ENCODE measurements at regions of chrX and their contacts with region 1.

Region 1: DNA sequence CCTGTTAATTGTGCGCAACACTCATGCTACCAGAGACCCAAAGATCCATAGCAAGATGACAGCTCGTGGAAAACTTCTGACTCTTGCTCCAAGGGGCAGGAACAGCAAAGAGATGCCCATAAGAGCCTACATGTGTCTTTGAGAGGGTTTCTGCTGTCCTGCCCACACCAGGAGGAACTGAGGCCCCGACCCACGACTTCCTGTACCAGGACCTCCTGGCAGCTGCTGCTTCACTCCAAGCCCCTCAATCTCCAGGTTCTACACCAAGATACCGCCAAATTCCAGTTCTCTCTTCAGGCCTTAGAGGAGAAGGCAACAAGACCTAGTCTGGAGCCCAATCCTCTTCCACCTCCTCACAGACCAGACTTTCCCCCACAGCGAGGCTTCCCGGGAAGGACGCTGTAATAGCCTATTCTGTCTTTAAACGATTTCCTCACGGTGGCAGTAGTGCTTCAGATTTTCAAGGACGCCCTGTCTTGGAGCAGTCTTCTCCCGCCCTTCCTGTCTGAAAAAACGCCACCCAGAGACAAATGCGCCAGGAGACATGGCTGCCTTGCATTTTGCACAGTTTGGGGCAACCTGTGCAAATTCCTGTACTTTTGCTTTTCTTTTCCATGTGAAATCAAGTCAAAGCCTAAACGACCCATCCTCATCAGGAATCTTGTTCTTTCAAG is 230.2 kb upstream of the STK26 start:
- DNase-seq: peak; percentile 90
- ATAC-seq: peak; percentile 77
- H3K4me3 ChIP-seq: peak overlapping the region; percentile 52
- H3K27ac ChIP-seq: peak overlapping the region; percentile 91
- H3K4me1 ChIP-seq: no peaks in the 10 kb centered on the region
- H3K27me3 ChIP-seq: no peaks in the 10 kb centered on the region; a peak in 1 of 4 replicates
- CTCF ChIP-seq: peak; percentile 32 to 65 (median 41); a peak in 4 of 6 replicates
- EP300 ChIP-seq: no peak
- POLR2A ChIP-seq: no peak
- RAD21 ChIP-seq: peak; percentile 69

Region 2: GRCh38 chrX:131710431-131711045 is 82.4 kb before region 1 on chrX:
- CTCF ChIA-PET with region 1: interaction called, 3 read pairs
- POLR2A ChIA-PET with region 1: no interaction called
- RAD21 ChIA-PET with region 1: no interaction called
- SMC1A ChIA-PET with region 1: no interaction called
- in situ Hi-C with region 1: no loop called
- intact Hi-C with region 1: loop called (anchors 1 kb)
- DNase-seq: no peak
- ATAC-seq: 0 out of 3 replicates have a peak, but pooled peaks have one; percentile 21
- H3K4me3 ChIP-seq: no peak overlapping the region
- H3K27ac ChIP-seq: peak overlapping the region; percentile 48
- H3K4me1 ChIP-seq: no peaks in the 10 kb centered on the region
- H3K27me3 ChIP-seq: no peaks in the 10 kb centered on the region
- CTCF ChIP-seq: no peak
- EP300 ChIP-seq: no peak
- POLR2A ChIP-seq: no peak
- RAD21 ChIP-seq: no peak

Region 3: DNA sequence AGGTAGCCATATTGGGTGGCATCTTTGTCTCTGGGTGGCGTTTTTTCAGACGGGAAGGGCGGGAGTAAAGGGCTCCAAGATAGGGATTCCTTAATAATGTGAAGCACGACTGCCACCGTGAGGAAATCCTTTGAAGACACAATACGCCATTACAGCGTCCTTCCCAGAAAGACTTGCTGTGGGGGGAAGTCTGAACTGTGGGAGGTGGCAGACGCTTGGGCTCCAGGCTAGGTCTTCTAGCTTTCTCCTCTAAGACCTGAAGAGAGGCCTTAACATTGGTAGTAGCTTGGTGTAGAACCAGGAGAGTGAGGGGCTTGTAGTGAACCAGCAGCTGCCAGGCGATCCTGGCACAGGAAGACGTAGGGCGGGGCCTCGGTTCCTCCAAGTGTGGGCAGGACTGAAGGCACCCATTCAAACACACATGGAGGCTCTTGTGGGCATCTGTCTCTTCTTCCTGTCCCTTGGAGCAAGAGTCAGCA is 51.8 kb before region 1 on chrX:
- CTCF ChIA-PET with region 1: interaction called, 6 read pairs
- POLR2A ChIA-PET with region 1: no interaction called
- RAD21 ChIA-PET with region 1: interaction called, 6 read pairs
- SMC1A ChIA-PET with region 1: interaction called, 6 read pairs
- in situ Hi-C with region 1: no loop called
- intact Hi-C with region 1: loop called (anchors 1 kb)
- DNase-seq: peak; percentile 87
- ATAC-seq: peak; percentile 83
- H3K4me3 ChIP-seq: peak overlapping the region; percentile 63
- H3K27ac ChIP-seq: peak overlapping the region; percentile 95
- H3K4me1 ChIP-seq: no peaks in the 10 kb centered on the region
- H3K27me3 ChIP-seq: no peaks in the 10 kb centered on the region
- CTCF ChIP-seq: peak; percentile 22 to 54 (median 43); a peak in 5 of 6 replicates
- EP300 ChIP-seq: no peak
- POLR2A ChIP-seq: 0 out of 2 replicates have a peak, but pooled peaks have one; percentile 28
- RAD21 ChIP-seq: peak; percentile 64

Region 4: GRCh38 chrX:131746474-131746968 is 46.4 kb before region 1 on chrX:
- CTCF ChIA-PET with region 1: interaction called, 6 read pairs
- POLR2A ChIA-PET with region 1: no interaction called
- RAD21 ChIA-PET with region 1: interaction called, 6 read pairs
- SMC1A ChIA-PET with region 1: interaction called, 6 read pairs
- in situ Hi-C with region 1: no loop called
- intact Hi-C with region 1: loop called (anchors 1 kb)
- DNase-seq: peak; percentile 87
- ATAC-seq: peak; percentile 68
- H3K4me3 ChIP-seq: peak overlapping the region; percentile 63
- H3K27ac ChIP-seq: peak overlapping the region; percentile 93
- H3K4me1 ChIP-seq: no peaks in the 10 kb centered on the region
- H3K27me3 ChIP-seq: no peaks in the 10 kb centered on the region
- CTCF ChIP-seq: peak; percentile 28 to 62 (median 41); a peak in 4 of 6 replicates
- EP300 ChIP-seq: no peak; a peak in 1 of 4 replicates
- POLR2A ChIP-seq: no peak
- RAD21 ChIP-seq: peak; percentile 58

Region 5: GRCh38 chrX:131802835-131803626 is 10.1 kb after region 1 on chrX:
- CTCF ChIA-PET with region 1: interaction called, 5 read pairs
- POLR2A ChIA-PET with region 1: interaction called, 6 read pairs
- RAD21 ChIA-PET with region 1: interaction called, 3 read pairs
- SMC1A ChIA-PET with region 1: interaction called, 6 read pairs
- in situ Hi-C with region 1: no loop called
- intact Hi-C with region 1: loop called (anchors 1 kb)
- DNase-seq: peak; percentile 68
- ATAC-seq: peak; percentile 97
- H3K4me3 ChIP-seq: peak overlapping the region; percentile 58; the same call in 1 of the 2 replicates
- H3K27ac ChIP-seq: peak overlapping the region; percentile 65
- H3K4me1 ChIP-seq: no peaks in the 10 kb centered on the region
- H3K27me3 ChIP-seq: no peaks in the 10 kb centered on the region
- CTCF ChIP-seq: peak; percentile 75 to 83 (median 75)
- EP300 ChIP-seq: no peak
- POLR2A ChIP-seq: no peak
- RAD21 ChIP-seq: peak; percentile 61

Region 6: GRCh38 chrX:131812836-131813825 is 20.2 kb after region 1 on chrX:
- CTCF ChIA-PET with region 1: interaction called, 7 read pairs
- POLR2A ChIA-PET with region 1: interaction called, 6 read pairs
- RAD21 ChIA-PET with region 1: interaction called, 6 read pairs
- SMC1A ChIA-PET with region 1: interaction called, 4 read pairs
- in situ Hi-C with region 1: no loop called
- intact Hi-C with region 1: loop called (anchors 1 kb)
- DNase-seq: peak; percentile 92
- ATAC-seq: peak; percentile 95
- H3K4me3 ChIP-seq: peak overlapping the region; percentile 58
- H3K27ac ChIP-seq: peak overlapping the region; percentile 84
- H3K4me1 ChIP-seq: peaks cover 13% of the 10 kb centered on the region; the same call in 1 of the 2 replicates
- H3K27me3 ChIP-seq: no peaks in the 10 kb centered on the region
- CTCF ChIP-seq: peak; percentile 45 to 86 (median 64); a peak in 5 of 6 replicates
- EP300 ChIP-seq: peak in 1 of 2 experiments; percentile 53; a peak in 2 of 4 replicates
- POLR2A ChIP-seq: no peak
- RAD21 ChIP-seq: peak; percentile 89

Region 7: GRCh38 chrX:131821945-131822622 is 29.2 kb after region 1 on chrX:
- CTCF ChIA-PET with region 1: interaction called, 4 read pairs
- POLR2A ChIA-PET with region 1: no interaction called
- RAD21 ChIA-PET with region 1: no interaction called
- SMC1A ChIA-PET with region 1: interaction called, 3 read pairs
- in situ Hi-C with region 1: no loop called
- intact Hi-C with region 1: loop called (anchors 1 kb)
- DNase-seq: peak; percentile 85
- ATAC-seq: peak; percentile 80
- H3K4me3 ChIP-seq: peak overlapping the region; percentile 64; the same call in 1 of the 2 replicates
- H3K27ac ChIP-seq: peak overlapping the region; percentile 63
- H3K4me1 ChIP-seq: peaks cover 4% of the 10 kb centered on the region; the same call in 1 of the 2 replicates
- H3K27me3 ChIP-seq: no peaks in the 10 kb centered on the region
- CTCF ChIP-seq: peak; percentile 22 to 71 (median 48); a peak in 4 of 6 replicates
- EP300 ChIP-seq: 0 out of 4 replicates have a peak, but pooled peaks of 1 of the 2 experiments have one; percentile 32
- POLR2A ChIP-seq: no peak
- RAD21 ChIP-seq: peak; percentile 70